Activated naive CD4-positive, alpha-beta T cell treated with anti-CD3 and anti-CD28 coated beads for 36 hours (primary cell): ENCODE measurements at regions of chr4 and their contacts with region 1.

Region 1: DNA sequence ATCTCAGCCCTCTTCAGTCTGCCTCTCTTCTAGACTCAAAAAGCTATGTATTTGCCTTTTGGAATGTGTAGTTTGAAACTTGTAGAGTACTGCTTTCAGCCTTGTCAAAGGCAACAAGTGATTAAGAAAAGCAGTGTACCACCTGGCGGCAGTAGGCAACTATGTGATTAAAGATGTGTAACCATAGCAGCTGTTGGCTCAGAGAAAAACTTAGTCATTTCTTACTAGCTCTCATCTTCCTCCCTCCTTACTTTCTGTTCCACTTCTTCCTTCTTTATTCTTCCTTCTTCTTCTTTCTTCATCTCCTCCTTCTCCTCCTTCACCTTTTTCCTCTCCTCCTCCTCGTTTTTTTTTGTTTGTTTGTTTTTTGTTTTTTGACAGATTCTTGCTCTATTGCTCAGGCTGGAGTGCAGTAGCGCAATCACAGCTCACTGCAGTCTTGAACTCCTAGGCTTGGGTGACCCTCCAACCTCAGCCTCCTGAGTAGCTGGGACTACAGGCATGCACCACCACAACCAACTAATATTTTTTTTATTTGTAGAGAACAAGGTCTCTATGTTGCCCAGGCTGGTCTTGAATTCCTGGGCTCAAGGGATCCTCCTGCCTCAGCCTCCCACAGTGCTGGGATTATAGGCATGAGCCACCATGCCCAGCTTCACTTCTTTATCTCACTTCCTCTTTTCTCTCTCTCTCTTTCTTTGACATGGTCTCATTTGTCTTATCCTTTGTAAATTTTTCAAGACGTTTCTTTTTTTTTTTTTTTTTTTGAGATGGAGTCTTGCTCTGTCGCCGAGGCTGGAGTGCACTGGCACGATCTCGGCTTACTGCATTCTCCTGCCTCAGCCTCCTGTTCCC is 32.6 kb downstream of the ABHD18 start:
- DNase-seq: peak; percentile 67
- H3K4me3 Mint-ChIP-seq: no peak overlapping the region
- H3K27ac Mint-ChIP-seq: peak overlapping the region; percentile 62
- H3K4me1 Mint-ChIP-seq: peaks cover 32% of the 10 kb centered on the region
- H3K27me3 Mint-ChIP-seq: no peaks in the 10 kb centered on the region

Region 2: GRCh38 chr4:128060699-128061565 is 63.2 kb after region 1 on chr4 and contains the start of gene LARP1B:
- CTCF ChIA-PET with region 1: interaction called, 3 read pairs
- intact Hi-C with region 1: loop called (anchors 1 kb)
- DNase-seq: peak; percentile 94
- H3K4me3 Mint-ChIP-seq: peak within 1 kb of the TSS; percentile 82
- H3K27ac Mint-ChIP-seq: peak within 1 kb of the TSS; percentile 81
- H3K4me1 Mint-ChIP-seq: peaks cover 16% of the 10 kb centered on the region
- H3K27me3 Mint-ChIP-seq: no peaks in the 10 kb centered on the region
- total RNA-seq, gene LARP1B: 17.6 to 18.9 TPM

Region 3: GRCh38 chr4:128163177-128164117 is 165.7 kb after region 1 on chr4:
- CTCF ChIA-PET with region 1: no interaction called
- intact Hi-C with region 1: no loop called
- DNase-seq: no peak
- H3K4me3 Mint-ChIP-seq: no peak overlapping the region
- H3K27ac Mint-ChIP-seq: no peak overlapping the region
- H3K4me1 Mint-ChIP-seq: no peaks in the 10 kb centered on the region
- H3K27me3 Mint-ChIP-seq: no peaks in the 10 kb centered on the region

Region 4: GRCh38 chr4:128220286-128221235 is 222.8 kb after region 1 on chr4:
- CTCF ChIA-PET with region 1: no interaction called
- intact Hi-C with region 1: loop called (anchors 2 kb)
- DNase-seq: no peak
- H3K4me3 Mint-ChIP-seq: no peak overlapping the region
- H3K27ac Mint-ChIP-seq: no peak overlapping the region
- H3K4me1 Mint-ChIP-seq: no peaks in the 10 kb centered on the region
- H3K27me3 Mint-ChIP-seq: no peaks in the 10 kb centered on the region